ENCODE measurements at regions of chr14 and their contacts with region 1.

Region 1: GRCh38 chr14:96735526-96735925 is 61.7 kb upstream of the VRK1 start:
- DNase-seq: no peak
- H3K4me3 ChIP-seq: no peak overlapping the region
- H3K27ac ChIP-seq: no peak overlapping the region
- H3K4me1 ChIP-seq: no peaks in the 10 kb centered on the region
- H3K27me3 ChIP-seq: peaks cover 80% of the 10 kb centered on the region
- CTCF ChIP-seq: no peak
- EP300 ChIP-seq: no peak
- POLR2A ChIP-seq: no peak

Region 2: GRCh38 chr14:94823556-94824338 is 1911.8 kb before region 1 on chr14:
- in situ Hi-C with region 1: no loop called
- intact Hi-C with region 1: loop called (anchors 5 kb)
- DNase-seq: no peak
- H3K4me3 ChIP-seq: no peak overlapping the region
- H3K27ac ChIP-seq: no peak overlapping the region
- H3K4me1 ChIP-seq: peaks cover 0 to 7% (median 0%) of the 10 kb centered on the region in 4 donors
- H3K27me3 ChIP-seq: no peaks in the 10 kb centered on the region
- CTCF ChIP-seq: no peak
- EP300 ChIP-seq: no peak
- POLR2A ChIP-seq: no peak

Region 3: GRCh38 chr14:96376093-96376492 is 359.4 kb before region 1 on chr14:
- in situ Hi-C with region 1: no loop called
- intact Hi-C with region 1: no loop called
- DNase-seq: peak; percentile 35
- H3K4me3 ChIP-seq: no peak overlapping the region
- H3K27ac ChIP-seq: peak overlapping the region; percentile 22 to 45 (median 28)
- H3K4me1 ChIP-seq: peaks cover 0 to 5% (median 2%) of the 10 kb centered on the region in 4 donors
- H3K27me3 ChIP-seq: no peaks in the 10 kb centered on the region
- CTCF ChIP-seq: no peak
- EP300 ChIP-seq: no peak
- POLR2A ChIP-seq: no peak

Region 4: GRCh38 chr14:96532632-96533031 is 202.9 kb before region 1 on chr14:
- in situ Hi-C with region 1: no loop called
- intact Hi-C with region 1: no loop called
- DNase-seq: no peak
- H3K4me3 ChIP-seq: no peak overlapping the region
- H3K27ac ChIP-seq: no peak overlapping the region
- H3K4me1 ChIP-seq: no peaks in the 10 kb centered on the region
- H3K27me3 ChIP-seq: no peaks in the 10 kb centered on the region
- CTCF ChIP-seq: no peak
- EP300 ChIP-seq: no peak
- POLR2A ChIP-seq: no peak

Region 5: DNA sequence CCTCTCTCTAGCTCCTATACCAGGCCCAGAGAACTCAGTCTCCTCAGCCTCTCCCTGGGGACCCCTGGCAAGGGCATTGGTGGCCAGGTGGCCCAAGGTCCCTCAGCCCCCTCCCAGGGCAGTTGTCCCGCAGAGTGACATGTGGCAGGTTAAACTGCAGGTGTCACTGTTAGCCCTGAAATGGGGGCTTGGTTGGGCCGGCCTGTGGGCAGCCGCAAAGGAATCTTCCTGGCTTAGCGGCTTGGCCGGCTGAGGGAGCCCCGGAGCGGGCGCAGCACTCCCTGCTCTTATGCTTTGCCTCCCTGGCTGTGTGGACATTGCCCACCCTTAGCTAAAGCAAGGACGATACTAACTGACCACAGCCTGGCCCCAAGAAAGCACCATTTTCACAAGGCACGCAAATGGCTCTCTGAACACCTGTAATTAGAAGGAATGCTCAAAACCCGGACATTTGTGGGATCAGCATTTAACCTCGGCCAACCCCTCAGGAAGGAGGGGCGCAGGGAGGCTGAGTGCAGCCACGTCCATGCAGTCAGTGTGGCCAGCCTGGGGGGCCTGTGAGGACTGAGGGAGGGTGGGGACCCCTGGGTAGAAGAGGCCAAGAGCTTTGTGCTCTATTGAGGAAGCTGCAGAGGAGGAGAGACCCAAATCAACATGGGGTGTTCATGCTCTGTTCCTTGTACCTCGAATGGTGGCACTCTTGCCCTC is 151.2 kb before region 1 on chr14:
- in situ Hi-C with region 1: no loop called
- intact Hi-C with region 1: loop called (anchors 10 kb)
- DNase-seq: peak; percentile 27
- H3K4me3 ChIP-seq: no peak overlapping the region
- H3K27ac ChIP-seq: no peak overlapping the region
- H3K4me1 ChIP-seq: no peaks in the 10 kb centered on the region
- H3K27me3 ChIP-seq: peaks cover 50% of the 10 kb centered on the region
- CTCF ChIP-seq: peak in 3 of 5 experiments; percentile 7 to 16 (median 11)
- EP300 ChIP-seq: no peak
- POLR2A ChIP-seq: no peak